ENCODE measurements at regions of chr17 and their contacts with region 1.

Region 1: GRCh38 chr17:51166197-51166986 is at the start of gene NME2:
- DNase-seq: peak; percentile 92
- ATAC-seq: peak; percentile 89
- H3K4me3 Mint-ChIP-seq: peak within 1 kb of the TSS; percentile 93
- H3K27ac Mint-ChIP-seq: peak within 1 kb of the TSS; percentile 97
- H3K4me1 Mint-ChIP-seq: peaks cover 16% of the 10 kb centered on the region
- H3K27me3 Mint-ChIP-seq: no peaks in the 10 kb centered on the region
- CTCF ChIP-seq: no peak
- total RNA-seq, gene NME2: 746 to 781 TPM (median 746 TPM) in 3 replicates

Region 2: GRCh38 chr17:51120739-51121617 is 45.4 kb before region 1 on chr17 and contains the start of gene SPAG9:
- CTCF ChIA-PET with region 1: interaction called, 5 read pairs
- POLR2A ChIA-PET with region 1: interaction called, 11 read pairs
- DNase-seq: peak; percentile 94
- ATAC-seq: peak; percentile 82
- H3K4me3 Mint-ChIP-seq: peak within 1 kb of the TSS; percentile 96
- H3K27ac Mint-ChIP-seq: peak within 1 kb of the TSS; percentile 99
- H3K4me1 Mint-ChIP-seq: peaks cover 27% of the 10 kb centered on the region
- H3K27me3 Mint-ChIP-seq: no peaks in the 10 kb centered on the region
- CTCF ChIP-seq: no peak
- total RNA-seq, gene SPAG9: 39.6 to 51.9 TPM (median 41.4 TPM) in 3 replicates

Region 3: DNA sequence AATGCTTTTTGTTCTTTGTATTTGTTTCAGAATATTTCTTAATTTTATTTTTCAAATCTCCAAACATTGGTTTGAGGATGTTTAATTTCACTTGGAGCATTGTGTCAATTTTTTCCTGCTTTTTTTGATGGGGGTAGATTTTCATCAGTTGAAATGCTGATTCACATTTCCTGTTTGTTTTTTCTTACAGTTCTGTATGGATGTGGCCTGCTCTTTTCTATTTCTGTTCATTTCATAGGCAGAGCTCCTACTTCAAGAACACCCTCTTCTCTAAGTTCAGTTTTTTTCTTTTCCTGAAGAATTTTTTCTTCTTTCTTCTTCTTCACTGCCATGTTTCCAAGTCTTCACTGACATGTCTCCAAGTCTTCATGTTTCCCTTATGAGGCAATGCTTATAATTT is 84.6 kb after region 1 on chr17:
- CTCF ChIA-PET with region 1: no interaction called
- POLR2A ChIA-PET with region 1: no interaction called
- DNase-seq: no peak
- ATAC-seq: no peak
- H3K4me3 Mint-ChIP-seq: no peak overlapping the region
- H3K27ac Mint-ChIP-seq: no peak overlapping the region
- H3K4me1 Mint-ChIP-seq: no peaks in the 10 kb centered on the region
- H3K27me3 Mint-ChIP-seq: no peaks in the 10 kb centered on the region
- CTCF ChIP-seq: no peak

Region 4: DNA sequence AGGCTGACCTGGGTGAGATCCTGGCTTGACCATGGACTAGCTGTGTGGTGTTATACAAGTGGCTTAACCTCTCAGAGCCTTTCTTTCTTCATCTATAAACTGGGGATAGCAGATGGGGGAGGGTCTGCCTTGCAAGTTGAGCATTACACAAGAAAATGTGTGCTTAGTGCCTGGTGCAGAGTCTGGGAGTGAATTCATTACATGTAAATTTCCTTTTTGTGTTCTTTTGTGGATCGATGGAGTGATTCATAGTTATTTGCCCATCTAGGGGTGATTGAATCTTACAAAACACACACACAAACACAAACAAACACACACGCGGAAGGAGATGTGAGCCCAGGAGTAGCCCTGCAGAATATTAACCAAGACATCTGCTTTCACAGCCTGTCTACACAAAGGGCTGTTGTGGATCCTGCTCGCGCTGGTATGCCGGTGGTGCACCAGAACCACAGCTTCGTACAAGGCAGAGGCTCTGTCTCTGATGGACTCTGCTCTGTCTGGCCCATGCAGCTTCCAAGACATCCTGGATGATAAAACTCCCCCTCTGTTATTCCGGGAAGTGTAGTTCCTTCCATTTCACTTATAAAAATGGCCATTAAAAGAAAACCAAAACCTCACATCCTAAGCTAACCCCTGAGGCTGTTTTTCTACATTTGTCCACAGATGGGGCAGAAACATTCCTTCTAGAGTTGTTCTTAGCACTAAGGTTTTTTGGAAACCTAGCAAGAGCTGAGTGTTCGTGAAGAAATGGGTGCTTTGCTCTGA is 180.0 kb after region 1 on chr17:
- CTCF ChIA-PET with region 1: no interaction called
- POLR2A ChIA-PET with region 1: no interaction called
- DNase-seq: no peak
- ATAC-seq: no peak; the same call in 1 of the 2 replicates
- H3K4me3 Mint-ChIP-seq: no peak overlapping the region
- H3K27ac Mint-ChIP-seq: no peak overlapping the region
- H3K4me1 Mint-ChIP-seq: peaks cover 3% of the 10 kb centered on the region; the same call in 1 of the 2 replicates
- H3K27me3 Mint-ChIP-seq: no peaks in the 10 kb centered on the region; the same call in 1 of the 2 replicates
- CTCF ChIP-seq: no peak

Measured in WTC11 (cell line).